Right ventricle myocardium inferior (tissue), 1 donor: ENCODE measurements at regions of chr1 and their contacts with region 1.

Region 1: GRCh38 chr1:117674521-117675397 is 68.9 kb downstream of the TENT5C start:
- DNase-seq: no peak
- ATAC-seq: no peak

Region 2: DNA sequence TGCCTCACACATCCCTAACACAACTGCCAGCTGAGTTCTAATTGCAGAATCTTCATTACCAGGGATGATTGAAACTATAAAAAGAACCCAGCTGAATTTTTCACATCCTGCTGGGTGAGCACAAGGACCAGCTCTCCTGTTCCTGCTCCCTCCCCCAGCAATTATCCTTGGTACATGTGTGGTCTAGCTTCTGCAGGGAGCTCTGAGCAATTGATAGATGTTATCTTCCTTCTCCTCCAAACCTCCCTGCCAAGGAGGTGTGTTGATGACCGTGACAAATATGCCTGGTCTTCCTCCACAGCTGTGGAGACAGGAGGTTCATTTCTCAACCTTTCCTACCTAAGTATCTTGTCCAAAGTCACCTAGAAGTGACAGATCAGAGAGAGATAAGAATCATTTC is 372.9 kb before region 1 on chr1:
- intact Hi-C with region 1: no loop called
- DNase-seq: no peak
- ATAC-seq: no peak

Region 3: DNA sequence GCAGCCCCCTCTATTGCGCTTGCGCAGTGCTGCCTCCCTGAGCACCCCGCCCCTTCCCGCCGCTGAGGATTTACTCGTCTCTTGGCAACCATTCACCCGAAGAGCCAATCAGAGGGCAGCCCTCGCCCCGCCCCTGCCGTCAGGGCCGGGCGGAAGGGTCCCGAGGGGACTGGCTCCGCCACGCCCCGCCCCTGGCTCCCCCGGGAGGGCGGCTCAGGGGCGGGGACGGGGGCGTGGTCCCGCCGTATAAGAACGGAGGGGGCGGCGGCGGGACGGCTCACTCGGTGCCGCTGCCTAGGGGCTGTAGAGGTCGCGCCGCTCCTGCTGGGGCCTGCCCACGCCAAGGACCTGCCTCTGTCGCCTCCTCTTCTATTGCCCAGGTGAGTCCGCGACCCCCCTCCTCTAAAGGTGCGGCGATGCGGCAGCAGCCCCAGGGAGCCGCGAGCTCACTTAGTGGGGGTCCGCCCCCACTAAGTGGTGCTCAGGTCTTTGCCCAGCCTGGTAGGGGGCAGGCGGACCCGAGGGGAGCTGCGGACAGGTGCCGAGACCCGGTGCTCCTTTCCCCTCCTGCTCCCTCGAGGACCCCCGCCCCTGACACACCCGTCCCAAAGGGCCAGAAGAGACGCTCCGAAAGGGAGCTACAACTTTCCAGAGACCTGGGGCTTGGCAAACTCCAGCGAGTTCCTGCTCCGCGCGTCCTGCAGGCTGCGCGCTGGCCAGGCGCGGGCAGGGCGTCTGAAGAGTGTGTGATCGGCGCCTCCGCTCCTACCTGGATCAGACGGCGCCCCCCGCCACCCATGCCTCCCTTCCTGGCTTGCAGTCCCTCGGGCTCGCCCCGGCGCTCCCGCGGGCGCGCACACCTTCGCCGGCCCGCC is 68.7 kb before region 1 on chr1 and contains the start of gene TENT5C:
- intact Hi-C with region 1: loop called (anchors 1 kb)
- DNase-seq: peak; percentile 99
- ATAC-seq: peak; percentile 97
- total RNA-seq, gene TENT5C: 18.7 TPM

Region 4: DNA sequence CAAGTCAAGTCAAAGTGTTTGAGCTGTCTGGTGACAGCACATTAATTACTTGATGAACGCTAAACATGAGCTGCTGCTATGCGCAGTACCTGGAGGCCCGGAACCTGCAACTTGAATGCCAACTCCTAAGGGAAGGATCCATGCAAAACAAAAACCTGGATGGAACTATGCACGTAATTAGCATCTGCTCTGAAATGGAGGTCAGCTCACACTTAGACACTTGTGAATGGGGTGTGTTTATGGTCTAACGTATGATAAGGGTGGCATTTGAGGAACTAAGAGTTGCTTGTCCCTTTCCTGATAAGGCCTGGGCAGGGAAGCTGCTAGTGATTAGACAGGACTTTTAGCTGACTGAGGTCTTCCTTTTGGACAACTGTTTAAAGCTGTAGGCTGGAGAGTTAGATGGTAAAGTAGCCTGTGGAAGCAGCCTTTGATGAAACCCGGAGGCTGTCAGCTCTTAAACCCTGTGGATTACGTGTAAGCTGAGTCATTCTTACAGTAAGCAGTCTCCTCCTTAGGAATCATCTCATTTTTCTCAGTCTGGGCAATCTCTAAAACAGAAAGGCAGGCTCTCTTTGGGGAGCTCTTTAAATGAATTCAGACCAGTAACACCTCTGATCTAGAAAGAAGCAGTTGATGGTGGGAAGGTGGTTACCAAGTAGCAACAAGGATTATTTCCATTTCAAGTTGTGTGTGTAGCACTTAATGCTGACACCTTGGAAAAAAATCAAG is 62.1 kb before region 1 on chr1:
- intact Hi-C with region 1: loop called (anchors 1 kb)
- DNase-seq: no peak
- ATAC-seq: peak; percentile 47

Region 5: GRCh38 chr1:117631359-117632160 is 43.2 kb before region 1 on chr1:
- intact Hi-C with region 1: loop called (anchors 2 kb)
- DNase-seq: no peak
- ATAC-seq: no peak